ENCODE measurements at regions of chr16 and their contacts with region 1.

Region 1: DNA sequence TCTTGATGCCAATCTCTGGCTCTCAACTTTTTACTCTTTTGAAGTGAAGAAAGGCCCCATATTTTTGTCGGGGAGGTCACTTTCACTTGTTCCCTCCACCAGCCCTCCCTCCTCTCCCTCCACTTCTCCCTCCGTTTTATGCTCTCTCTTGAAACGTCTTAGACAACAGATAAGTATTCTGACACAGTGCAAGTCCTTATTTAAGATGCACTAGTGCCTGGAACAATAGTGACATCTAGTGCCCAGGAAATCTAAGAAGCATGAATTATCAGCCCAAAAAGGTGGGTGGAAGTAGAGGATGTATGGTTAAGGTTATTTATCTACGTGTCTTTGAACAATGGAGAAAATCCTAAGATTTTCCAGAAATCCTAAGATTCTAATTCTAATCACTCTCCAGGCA is 17.9 kb downstream of the PSME3IP1 start:
- DNase-seq: no peak
- H3K4me3 ChIP-seq: no peak overlapping the region
- H3K27ac ChIP-seq: peak overlapping the region; percentile 33
- H3K4me1 ChIP-seq: peaks cover 21% of the 10 kb centered on the region
- H3K27me3 ChIP-seq: no peaks in the 10 kb centered on the region
- CTCF ChIP-seq: peak in 2 of 3 experiments; percentile 45 to 51
- POLR2A ChIP-seq: no peak

Region 2: DNA sequence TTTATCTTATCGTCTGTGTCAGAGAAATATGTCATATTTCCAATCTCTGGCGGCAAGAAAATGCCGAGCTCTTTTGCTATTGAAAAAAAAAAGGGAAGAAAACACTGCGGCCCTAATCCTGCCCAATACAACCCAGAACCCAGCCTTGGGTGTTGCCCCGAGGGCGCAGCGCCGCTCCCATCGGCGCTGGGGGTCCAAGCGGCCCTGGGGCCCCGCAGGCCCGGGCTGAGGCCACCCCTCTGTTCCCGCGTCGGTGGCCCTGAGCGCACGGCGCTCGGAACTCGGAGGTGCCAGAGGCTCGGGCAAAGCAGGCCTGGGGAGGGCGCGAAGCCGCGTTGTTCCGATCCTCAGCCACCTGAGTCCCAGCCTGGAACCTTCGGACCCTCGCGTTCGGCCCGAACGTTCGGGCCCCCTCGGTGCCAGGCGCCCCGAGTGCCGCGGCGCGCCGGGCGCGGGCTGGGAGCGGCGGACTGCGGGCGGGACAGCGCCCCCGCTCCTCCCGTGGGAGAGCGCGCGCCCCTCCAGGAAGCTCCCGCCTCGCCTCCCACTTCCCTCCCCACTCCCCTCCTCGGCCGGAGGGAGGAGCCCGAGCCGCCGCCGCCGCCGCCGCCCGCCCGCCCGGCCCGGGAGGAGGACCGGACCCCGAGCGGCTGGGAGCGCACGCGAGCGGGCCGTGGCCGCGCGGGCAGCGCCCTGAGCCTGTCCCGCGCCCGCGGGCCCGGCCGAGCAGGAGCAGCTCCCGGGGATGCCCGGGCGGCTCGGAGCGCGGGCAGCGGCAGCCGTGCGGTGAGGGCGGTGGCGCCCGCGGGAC is 75.8 kb before region 1 on chr16 and contains the start of gene CPNE2:
- intact Hi-C with region 1: loop called (anchors 5 kb)
- DNase-seq: no peak
- H3K4me3 ChIP-seq: peak within 1 kb of the TSS; percentile 87 to 98
- H3K27ac ChIP-seq: peak within 1 kb of the TSS; percentile 93
- H3K4me1 ChIP-seq: peaks cover 37% of the 10 kb centered on the region
- H3K27me3 ChIP-seq: no peaks in the 10 kb centered on the region
- CTCF ChIP-seq: no peak
- POLR2A ChIP-seq: peak in 1 of 2 donors; percentile 17
- total RNA-seq, gene CPNE2: 40.3 TPM

Region 3: DNA sequence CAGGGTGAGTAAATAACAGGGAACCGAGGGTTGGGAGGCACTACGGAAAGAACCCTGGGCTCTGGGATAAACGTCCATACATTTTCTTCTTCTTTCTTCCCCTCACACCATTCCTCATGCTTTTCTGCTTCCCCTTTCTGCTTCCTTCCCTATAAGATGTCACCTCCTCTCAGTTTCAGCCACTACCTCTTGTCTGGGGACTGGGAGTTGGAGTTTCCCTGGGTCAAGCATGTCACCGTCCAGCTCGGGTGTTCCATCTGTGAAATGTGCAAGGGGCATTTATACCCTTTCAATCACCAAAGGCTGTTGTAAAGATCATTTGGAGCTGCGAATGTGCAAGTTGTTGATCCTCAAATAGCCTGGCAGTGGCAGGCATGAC is 173.1 kb after region 1 on chr16:
- intact Hi-C with region 1: no loop called
- DNase-seq: no peak
- H3K4me3 ChIP-seq: no peak overlapping the region
- H3K27ac ChIP-seq: peak overlapping the region; percentile 10
- H3K4me1 ChIP-seq: peaks cover 12% of the 10 kb centered on the region
- H3K27me3 ChIP-seq: no peaks in the 10 kb centered on the region
- CTCF ChIP-seq: no peak
- POLR2A ChIP-seq: no peak

Region 4: GRCh38 chr16:57403965-57404817 is 236.2 kb after region 1 on chr16 and contains the start of gene CCL17:
- intact Hi-C with region 1: no loop called
- DNase-seq: no peak
- H3K4me3 ChIP-seq: no peak within 1 kb of the TSS
- H3K27ac ChIP-seq: no peak within 1 kb of the TSS
- H3K4me1 ChIP-seq: no peaks in the 10 kb centered on the region
- H3K27me3 ChIP-seq: no peaks in the 10 kb centered on the region
- CTCF ChIP-seq: no peak
- POLR2A ChIP-seq: no peak
- total RNA-seq, gene CCL17: not detected

Measured in vagina (tissue), 2 donors.